Lower lobe of right lung (tissue), 2 donors: ENCODE measurements at regions of chr7 and their contacts with region 1.

Region 1: GRCh38 chr7:24463474-24463873 is 109.8 kb upstream of the PALS2 start:
- DNase-seq: no peak
- ATAC-seq: no peak
- H3K4me3 ChIP-seq: no peak overlapping the region
- H3K27ac ChIP-seq: no peak overlapping the region
- H3K4me1 ChIP-seq: no peaks in the 10 kb centered on the region
- H3K27me3 ChIP-seq: no peaks in the 10 kb centered on the region
- CTCF ChIP-seq: no peak

Region 2: DNA sequence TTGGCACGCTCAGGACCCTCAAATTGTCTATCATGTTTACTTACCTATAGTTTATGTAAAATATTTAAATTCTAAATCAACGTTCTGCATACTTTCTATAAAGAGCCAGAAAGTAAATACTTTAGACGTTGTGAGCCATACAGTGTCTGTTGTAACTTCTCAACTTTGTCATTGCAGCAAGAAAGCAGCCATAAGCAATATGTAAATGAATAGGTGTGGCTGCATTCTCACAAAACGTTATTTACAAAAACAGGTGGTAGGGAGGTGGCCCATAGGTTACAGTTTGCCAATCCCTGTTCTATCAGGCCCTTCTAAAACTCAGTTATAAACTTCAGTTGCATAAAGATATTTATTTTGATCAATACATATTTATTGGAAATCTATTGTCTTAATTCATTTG is 191.5 kb before region 1 on chr7:
- intact Hi-C with region 1: no loop called
- DNase-seq: no peak
- ATAC-seq: no peak
- H3K4me3 ChIP-seq: no peak overlapping the region
- H3K27ac ChIP-seq: no peak overlapping the region
- H3K4me1 ChIP-seq: no peaks in the 10 kb centered on the region
- H3K27me3 ChIP-seq: no peaks in the 10 kb centered on the region
- CTCF ChIP-seq: no peak

Region 3: GRCh38 chr7:24401628-24402593 is 61.6 kb before region 1 on chr7:
- intact Hi-C with region 1: loop called (anchors 10 kb)
- DNase-seq: no peak
- ATAC-seq: peak in 1 of 2 donors; percentile 42
- H3K4me3 ChIP-seq: no peak overlapping the region
- H3K27ac ChIP-seq: no peak overlapping the region
- H3K4me1 ChIP-seq: no peaks in the 10 kb centered on the region
- H3K27me3 ChIP-seq: no peaks in the 10 kb centered on the region
- CTCF ChIP-seq: peak; percentile 22